ENCODE measurements at regions of chr14 and their contacts with region 1.

Region 1: DNA sequence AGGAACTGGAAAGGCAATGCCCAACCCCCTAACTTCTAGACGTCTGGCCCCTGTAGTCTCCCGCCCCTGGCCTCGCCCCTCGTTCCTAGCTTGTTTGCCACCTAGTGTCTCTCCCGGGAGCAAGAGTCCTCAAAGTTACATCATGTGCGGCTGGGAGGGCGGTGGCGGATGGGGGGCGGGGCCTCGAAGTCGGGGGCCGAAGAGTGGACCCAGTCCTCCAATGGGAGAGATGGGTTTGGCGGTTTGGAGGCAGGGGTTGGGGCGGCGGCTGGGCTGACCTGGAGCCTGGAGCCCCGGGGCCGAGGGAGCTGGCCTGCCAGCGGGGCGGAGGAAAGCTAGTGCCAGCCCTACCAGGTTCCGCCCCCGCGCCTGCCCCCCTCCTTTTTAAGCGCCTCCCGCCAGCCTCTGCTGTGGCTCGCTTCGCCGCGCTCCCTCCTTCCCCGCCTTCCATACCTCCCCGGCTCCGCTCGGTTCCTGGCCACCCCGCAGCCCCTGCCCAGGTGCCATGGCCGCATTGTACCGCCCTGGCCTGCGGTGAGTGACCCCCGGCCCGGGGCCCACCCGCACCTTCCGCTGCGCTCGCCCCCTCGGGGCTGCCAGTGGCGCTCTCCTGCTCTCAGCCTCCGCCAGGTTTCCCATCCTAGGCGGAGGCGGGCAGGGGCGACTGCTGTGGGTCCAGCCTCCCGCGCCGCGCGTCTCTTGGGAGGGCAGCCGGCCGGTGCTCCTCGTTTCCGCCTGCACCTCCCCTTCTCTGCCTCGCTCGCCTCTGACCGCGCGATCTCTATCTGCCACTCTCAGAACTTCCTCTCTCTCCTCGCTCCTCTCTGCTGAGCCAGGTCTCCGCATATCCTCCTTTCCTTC is at the start of gene PCK2:
- DNase-seq: peak; percentile 89
- H3K4me3 ChIP-seq: peak within 1 kb of the TSS; percentile 66 to 93
- H3K27ac ChIP-seq: peak within 1 kb of the TSS; percentile 93 to 98
- H3K4me1 ChIP-seq: no peaks in the 10 kb centered on the region
- H3K27me3 ChIP-seq: no peaks in the 10 kb centered on the region
- CTCF ChIP-seq: peak in 2 of 4 experiments; percentile 23 to 35
- POLR2A ChIP-seq: no peak
- total RNA-seq, gene PCK2: 15.4 to 21.8 TPM

Region 2: GRCh38 chr14:22502007-22502406 is 1592.1 kb before region 1 on chr14:
- intact Hi-C with region 1: loop called (anchors 5 kb)
- DNase-seq: peak; percentile 41
- H3K4me3 ChIP-seq: no peak overlapping the region
- H3K27ac ChIP-seq: peak overlapping the region; percentile 5 to 20
- H3K4me1 ChIP-seq: no peaks in the 10 kb centered on the region
- H3K27me3 ChIP-seq: no peaks in the 10 kb centered on the region
- CTCF ChIP-seq: no peak
- POLR2A ChIP-seq: no peak

Region 3: GRCh38 chr14:24013654-24014514 is 80.2 kb before region 1 on chr14:
- intact Hi-C with region 1: loop called (anchors 5 kb)
- DNase-seq: peak; percentile 59
- H3K4me3 ChIP-seq: no peak overlapping the region
- H3K27ac ChIP-seq: no peak overlapping the region
- H3K4me1 ChIP-seq: peaks cover 3% of the 10 kb centered on the region
- H3K27me3 ChIP-seq: no peaks in the 10 kb centered on the region
- CTCF ChIP-seq: peak; percentile 89 to 95 (median 91)
- POLR2A ChIP-seq: no peak

Region 4: DNA sequence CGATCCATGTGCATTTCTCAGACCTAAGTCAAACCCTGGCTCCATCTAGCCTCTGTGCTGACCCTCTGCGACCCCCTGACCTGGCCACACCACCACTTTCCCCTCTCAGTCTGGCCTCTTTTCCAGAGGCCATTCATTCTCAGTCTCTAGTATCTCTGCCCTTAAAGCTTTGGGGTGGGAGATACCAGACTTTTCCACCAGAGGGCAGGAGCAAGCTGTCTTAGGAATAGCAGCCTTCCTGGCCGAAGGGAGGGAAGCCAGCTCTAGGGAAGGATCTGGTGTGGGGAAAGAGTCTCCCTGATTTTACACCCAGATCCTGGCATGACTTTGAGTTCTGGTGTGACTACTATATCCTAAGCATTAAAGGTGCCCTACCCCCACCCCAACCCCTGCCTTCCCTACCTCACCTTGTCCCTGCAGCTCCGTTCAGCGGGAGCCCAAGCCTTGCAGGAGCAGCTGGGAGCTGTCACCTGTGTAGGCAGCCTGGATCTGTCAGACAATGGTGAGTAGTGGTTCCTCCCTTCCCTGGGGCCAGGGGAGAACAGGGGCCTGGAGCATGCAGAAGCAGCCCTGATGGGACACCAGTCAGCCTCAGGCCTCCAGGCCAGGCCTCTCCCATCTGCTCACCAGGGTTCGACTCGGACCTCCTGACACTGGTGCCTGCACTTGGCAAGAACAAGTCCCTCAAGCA is 35.7 kb before region 1 on chr14:
- intact Hi-C with region 1: loop called (anchors 2 kb)
- DNase-seq: peak; percentile 86
- H3K4me3 ChIP-seq: no peak overlapping the region
- H3K27ac ChIP-seq: no peak overlapping the region
- H3K4me1 ChIP-seq: no peaks in the 10 kb centered on the region
- H3K27me3 ChIP-seq: no peaks in the 10 kb centered on the region
- CTCF ChIP-seq: peak in 3 of 4 experiments; percentile 88 to 95 (median 89)
- POLR2A ChIP-seq: no peak

Region 5: GRCh38 chr14:24114536-24115450 is 20.7 kb after region 1 on chr14 and contains the starts of genes DCAF11 and NRL:
- intact Hi-C with region 1: loop called (anchors 2 kb)
- DNase-seq: peak; percentile 99
- H3K4me3 ChIP-seq: peak within 1 kb of the TSS; percentile 62 to 69
- H3K27ac ChIP-seq: peak within 1 kb of the TSS; percentile 99
- H3K4me1 ChIP-seq: peaks cover 4% of the 10 kb centered on the region
- H3K27me3 ChIP-seq: no peaks in the 10 kb centered on the region
- CTCF ChIP-seq: peak in 1 of 4 experiments; percentile 2
- POLR2A ChIP-seq: peak; percentile 84
- total RNA-seq, gene DCAF11: 111 to 115 TPM
- total RNA-seq, gene NRL: 4.3 to 4.7 TPM

Region 6: GRCh38 chr14:24329736-24330135 is 235.6 kb after region 1 on chr14:
- intact Hi-C with region 1: no loop called
- DNase-seq: no peak
- H3K4me3 ChIP-seq: no peak overlapping the region
- H3K27ac ChIP-seq: no peak overlapping the region
- H3K4me1 ChIP-seq: peaks cover 5% of the 10 kb centered on the region
- H3K27me3 ChIP-seq: no peaks in the 10 kb centered on the region
- CTCF ChIP-seq: no peak
- POLR2A ChIP-seq: no peak